SK-N-SH (cell line): ENCODE measurements at regions of chr1 and their contacts with region 1.

Region 1: DNA sequence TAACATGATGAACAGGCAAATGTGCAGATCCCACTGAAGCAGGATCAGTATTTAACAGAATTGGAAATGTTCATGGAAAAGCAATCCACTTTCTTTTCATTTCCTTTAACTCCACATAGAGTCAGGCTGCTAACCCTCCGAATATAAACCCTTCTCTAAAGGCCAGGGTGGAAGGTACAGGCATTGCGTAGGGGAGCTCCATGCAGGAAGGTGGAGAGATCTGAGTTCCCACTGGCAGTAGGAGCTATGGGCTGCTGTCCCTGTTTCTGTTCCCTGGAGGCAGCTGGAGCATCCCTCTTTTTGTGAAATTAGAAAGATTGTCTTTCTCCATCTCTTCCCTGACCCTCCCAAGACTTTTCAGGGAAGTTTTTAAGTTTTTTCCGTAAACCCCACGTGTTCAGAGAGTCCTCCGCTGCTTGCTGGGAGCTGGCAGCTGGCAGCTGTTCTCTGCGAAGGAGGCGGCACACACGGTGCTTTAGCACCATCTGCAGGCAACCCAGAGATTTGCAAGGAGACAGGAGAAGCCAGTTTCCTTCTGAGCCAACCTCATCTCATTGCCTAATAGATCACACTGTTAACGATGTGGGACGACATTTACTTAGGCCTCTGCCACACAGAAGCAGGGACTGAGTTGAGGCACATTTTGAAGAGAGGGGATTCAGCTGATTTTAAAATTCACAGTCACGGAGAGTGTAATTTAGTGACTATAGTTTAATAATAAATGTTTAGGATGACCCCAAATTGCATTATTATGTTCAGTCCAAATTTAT is 55.4 kb upstream of the HOOK1 start:
- DNase-seq: peak; percentile 73
- H3K4me3 ChIP-seq: peak overlapping the region in 1 of 2 experiments; percentile 39; a peak in 2 of 4 replicates
- H3K27ac ChIP-seq: no peak overlapping the region
- H3K4me1 ChIP-seq: peaks cover 7% of the 10 kb centered on the region in 2 experiments
- H3K27me3 ChIP-seq: no peaks in the 10 kb centered on the region
- CTCF ChIP-seq: peak; percentile 93
- EP300 ChIP-seq: no peak
- RAD21 ChIP-seq: peak; percentile 98

Region 2: GRCh38 chr1:58768971-58769808 is 990.2 kb before region 1 on chr1:
- CTCF ChIA-PET with region 1: interaction called, 16 read pairs
- POLR2A ChIA-PET with region 1: no interaction called
- DNase-seq: peak; percentile 73
- H3K4me3 ChIP-seq: no peak overlapping the region; a peak in 1 of 4 replicates
- H3K27ac ChIP-seq: peak overlapping the region; percentile 53 to 65; a peak in 3 of 4 replicates
- H3K4me1 ChIP-seq: peaks cover 0 to 26% of the 10 kb centered on the region in 2 experiments
- H3K27me3 ChIP-seq: no peaks in the 10 kb centered on the region
- CTCF ChIP-seq: peak; percentile 91
- EP300 ChIP-seq: no peak
- RAD21 ChIP-seq: peak; percentile 75

Region 3: GRCh38 chr1:59619557-59619956 is 139.8 kb before region 1 on chr1:
- CTCF ChIA-PET with region 1: no interaction called
- POLR2A ChIA-PET with region 1: no interaction called
- DNase-seq: no peak
- H3K4me3 ChIP-seq: no peak overlapping the region
- H3K27ac ChIP-seq: no peak overlapping the region
- H3K4me1 ChIP-seq: no peaks in the 10 kb centered on the region; a peak in 1 of 4 replicates
- H3K27me3 ChIP-seq: no peaks in the 10 kb centered on the region
- CTCF ChIP-seq: no peak
- EP300 ChIP-seq: no peak
- RAD21 ChIP-seq: no peak

Region 4: GRCh38 chr1:59699227-59699847 is 60.0 kb before region 1 on chr1:
- CTCF ChIA-PET with region 1: interaction called, 45 read pairs
- POLR2A ChIA-PET with region 1: no interaction called
- DNase-seq: peak; percentile 31
- H3K4me3 ChIP-seq: peak overlapping the region in 1 of 2 experiments; percentile 24; a peak in 1 of 4 replicates
- H3K27ac ChIP-seq: peak overlapping the region; percentile 56 to 68; a peak in 3 of 4 replicates
- H3K4me1 ChIP-seq: peaks cover 12 to 23% of the 10 kb centered on the region in 2 experiments
- H3K27me3 ChIP-seq: no peaks in the 10 kb centered on the region
- CTCF ChIP-seq: peak; percentile 98
- EP300 ChIP-seq: no peak
- RAD21 ChIP-seq: peak; percentile 96

Region 5: DNA sequence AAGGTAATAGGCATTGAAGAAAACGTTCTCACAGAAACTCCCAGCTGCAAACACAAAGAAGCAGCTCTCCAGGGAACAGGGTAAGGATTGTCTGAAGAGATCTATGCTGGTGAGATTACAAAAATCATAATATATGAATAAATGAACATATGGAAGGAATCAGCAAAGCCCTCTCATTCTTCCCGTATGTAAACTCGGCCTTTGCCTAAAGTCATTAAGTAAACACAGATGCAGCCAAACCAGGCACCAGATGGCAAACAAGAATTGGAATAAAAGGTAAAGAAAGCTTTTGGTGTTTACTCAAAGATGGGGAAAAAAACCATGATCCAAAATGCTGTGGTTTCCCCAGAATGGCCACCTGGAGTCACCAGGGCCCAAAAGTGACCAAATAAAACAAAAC is 21.2 kb before region 1 on chr1:
- CTCF ChIA-PET with region 1: interaction called, 16 read pairs
- POLR2A ChIA-PET with region 1: no interaction called
- DNase-seq: no peak
- H3K4me3 ChIP-seq: no peak overlapping the region
- H3K27ac ChIP-seq: peak overlapping the region; percentile 60 to 76; a peak in 2 of 4 replicates
- H3K4me1 ChIP-seq: peaks cover 3 to 8% of the 10 kb centered on the region in 2 experiments; a peak in 3 of 4 replicates
- H3K27me3 ChIP-seq: no peaks in the 10 kb centered on the region
- CTCF ChIP-seq: no peak
- EP300 ChIP-seq: no peak; a peak in 1 of 4 replicates
- RAD21 ChIP-seq: no peak

Region 6: GRCh38 chr1:59845091-59845490 is 85.8 kb after region 1 on chr1:
- CTCF ChIA-PET with region 1: no interaction called
- POLR2A ChIA-PET with region 1: no interaction called
- DNase-seq: no peak
- H3K4me3 ChIP-seq: no peak overlapping the region
- H3K27ac ChIP-seq: no peak overlapping the region
- H3K4me1 ChIP-seq: no peaks in the 10 kb centered on the region; a peak in 1 of 4 replicates
- H3K27me3 ChIP-seq: no peaks in the 10 kb centered on the region
- CTCF ChIP-seq: no peak
- EP300 ChIP-seq: no peak
- RAD21 ChIP-seq: no peak